ENCODE measurements at regions of chr10 and their contacts with region 1.

Region 1: DNA sequence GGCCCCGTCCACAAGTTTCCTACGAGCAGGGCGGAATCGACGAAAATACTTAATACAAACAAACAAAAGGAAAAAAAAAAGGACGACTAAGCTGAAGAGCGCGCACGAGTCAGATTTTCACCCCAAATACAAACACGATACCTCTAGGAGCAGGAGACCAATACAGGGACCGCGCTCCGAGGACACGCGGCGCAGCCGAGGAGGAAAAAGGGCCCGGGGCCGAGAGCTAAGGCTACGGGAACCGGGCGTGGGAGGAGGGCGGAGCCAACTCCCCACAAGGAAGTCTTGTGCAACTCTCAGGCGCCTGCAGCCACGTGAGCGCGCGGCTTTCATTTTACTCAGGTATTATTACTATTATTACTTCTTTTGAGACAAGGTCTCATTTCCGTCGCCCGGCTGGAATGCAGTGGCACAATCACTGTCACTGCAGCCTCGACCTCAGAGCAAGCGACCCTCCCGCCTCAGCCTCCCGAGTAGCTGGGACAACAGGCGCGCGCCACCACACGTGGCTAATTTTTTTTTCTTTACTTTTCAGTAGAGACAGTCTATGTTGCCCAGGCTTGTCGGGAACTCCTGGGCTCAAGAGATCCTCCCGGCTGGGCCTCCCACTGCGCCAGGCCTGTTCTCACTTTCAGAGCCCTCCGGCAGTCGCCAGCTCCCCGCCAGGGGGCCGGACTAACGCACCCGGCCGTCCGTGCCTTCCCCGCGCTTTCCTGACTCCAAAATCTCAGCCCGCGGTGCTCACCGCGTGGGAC is 1.2 kb downstream of the HNRNPF start:
- DNase-seq: peak; percentile 78 to 90 (median 81)
- H3K4me3 ChIP-seq: peak overlapping the region; percentile 97
- H3K4me3 Mint-ChIP-seq: peak overlapping the region; percentile 96 to 100 (median 99)
- H3K27ac ChIP-seq: peak overlapping the region; percentile 100
- H3K27ac Mint-ChIP-seq: peak overlapping the region; percentile 97 to 100 (median 99)
- H3K4me1 ChIP-seq: peaks cover 39% of the 10 kb centered on the region
- H3K4me1 Mint-ChIP-seq: peaks cover 28 to 43% (median 31%) of the 10 kb centered on the region in 3 donors
- H3K27me3 ChIP-seq: no peaks in the 10 kb centered on the region
- H3K27me3 Mint-ChIP-seq: peaks cover 0 to 2% of the 10 kb centered on the region in 2 donors

Region 2: DNA sequence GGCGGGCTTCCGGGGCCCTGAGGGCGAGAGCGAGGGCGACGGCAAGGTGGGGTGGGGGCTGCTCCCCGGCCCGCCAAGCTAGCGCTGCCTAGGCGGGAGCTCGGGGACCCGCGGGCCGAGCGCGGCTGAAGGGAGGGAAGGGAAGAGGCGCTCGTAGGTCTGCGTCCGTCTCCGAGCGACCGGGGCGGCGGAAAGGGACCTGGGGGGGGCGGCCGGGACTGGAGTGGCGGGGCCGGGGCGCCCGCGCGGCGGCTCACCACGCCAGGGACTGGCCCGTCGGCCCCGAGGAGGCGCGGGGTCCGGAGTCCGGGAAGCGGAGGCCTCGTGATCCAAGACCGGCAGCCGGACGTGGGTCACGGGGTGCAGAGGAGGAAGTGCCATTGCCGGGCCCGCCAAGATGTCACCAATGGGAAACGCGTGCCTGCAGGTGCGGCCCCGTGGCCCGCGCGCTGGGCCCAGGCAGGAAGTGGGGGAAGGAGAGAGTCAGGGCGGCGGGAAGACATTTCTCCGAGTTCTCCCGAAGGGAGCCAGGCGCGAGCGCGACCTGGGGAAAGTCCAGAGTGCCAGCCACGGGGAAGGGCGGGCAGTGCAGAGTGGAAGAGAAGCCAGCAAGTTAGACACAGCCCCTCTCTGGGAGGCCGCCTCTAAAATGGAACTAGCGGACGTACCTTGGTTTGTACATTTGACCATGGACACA is 10.7 kb before region 1 on chr10:
- CTCF ChIA-PET with region 1: interaction called, 12 read pairs
- POLR2A ChIA-PET with region 1: interaction called, 18 read pairs
- DNase-seq: peak; percentile 67 to 83 (median 78)
- H3K4me3 ChIP-seq: peak overlapping the region; percentile 65
- H3K4me3 Mint-ChIP-seq: peak overlapping the region; percentile 92 to 96 (median 95)
- H3K27ac ChIP-seq: peak overlapping the region; percentile 85
- H3K27ac Mint-ChIP-seq: peak overlapping the region; percentile 91 to 100 (median 98)
- H3K4me1 ChIP-seq: peaks cover 80% of the 10 kb centered on the region
- H3K4me1 Mint-ChIP-seq: peaks cover 77 to 92% (median 90%) of the 10 kb centered on the region in 3 donors
- H3K27me3 ChIP-seq: no peaks in the 10 kb centered on the region
- H3K27me3 Mint-ChIP-seq: no peaks in the 10 kb centered on the region

Region 3: DNA sequence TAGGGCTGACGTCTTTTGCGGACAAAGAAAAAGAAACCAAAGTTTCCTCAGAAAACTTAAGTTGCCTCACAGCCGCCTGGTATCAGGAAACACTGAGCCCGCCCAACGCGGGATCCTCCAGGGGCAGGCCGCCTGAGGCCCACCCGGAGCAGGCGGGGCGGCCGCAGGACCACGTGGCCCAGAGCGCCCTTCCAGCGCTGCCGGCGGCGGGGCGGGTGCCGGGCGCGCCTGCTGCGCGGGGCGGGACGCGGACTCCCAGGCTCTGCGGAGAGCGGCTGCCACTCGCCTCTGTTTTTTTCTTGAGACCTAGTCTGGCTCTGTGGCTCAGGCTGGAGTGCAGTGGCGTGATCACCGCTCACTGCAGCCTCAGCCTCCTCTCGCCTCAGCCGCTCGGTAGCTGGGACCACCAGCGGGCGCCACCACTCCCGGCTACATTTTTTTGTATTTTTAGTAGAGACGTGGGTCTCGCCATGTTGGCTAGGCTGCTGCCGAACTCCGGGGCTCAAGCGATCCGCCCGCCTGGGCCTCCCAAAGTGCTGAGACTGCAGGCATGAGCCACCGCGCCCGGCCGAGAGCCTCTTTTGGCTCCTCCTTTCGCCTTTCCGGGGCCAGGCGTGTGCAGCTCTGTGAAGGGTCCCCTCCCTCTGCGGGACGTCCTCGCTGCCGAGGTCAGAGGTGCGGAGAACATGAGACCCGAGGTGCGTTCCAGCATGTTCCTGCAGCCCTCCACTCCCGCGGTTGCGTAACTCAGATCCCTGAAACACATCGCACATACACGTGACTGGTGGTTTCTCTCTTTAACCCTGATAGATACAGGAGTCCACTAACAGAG is 12.8 kb after region 1 on chr10:
- CTCF ChIA-PET with region 1: interaction called, 14 read pairs
- POLR2A ChIA-PET with region 1: interaction called, 24 read pairs
- DNase-seq: peak; percentile 78 to 91 (median 89)
- H3K4me3 ChIP-seq: peak overlapping the region; percentile 90
- H3K4me3 Mint-ChIP-seq: peak overlapping the region; percentile 92 to 94 (median 94)
- H3K27ac ChIP-seq: peak overlapping the region; percentile 88
- H3K27ac Mint-ChIP-seq: peak overlapping the region; percentile 97 to 100 (median 98)
- H3K4me1 ChIP-seq: peaks cover 37% of the 10 kb centered on the region
- H3K4me1 Mint-ChIP-seq: peaks cover 33 to 39% (median 38%) of the 10 kb centered on the region in 3 donors
- H3K27me3 ChIP-seq: no peaks in the 10 kb centered on the region
- H3K27me3 Mint-ChIP-seq: no peaks in the 10 kb centered on the region

Region 4: DNA sequence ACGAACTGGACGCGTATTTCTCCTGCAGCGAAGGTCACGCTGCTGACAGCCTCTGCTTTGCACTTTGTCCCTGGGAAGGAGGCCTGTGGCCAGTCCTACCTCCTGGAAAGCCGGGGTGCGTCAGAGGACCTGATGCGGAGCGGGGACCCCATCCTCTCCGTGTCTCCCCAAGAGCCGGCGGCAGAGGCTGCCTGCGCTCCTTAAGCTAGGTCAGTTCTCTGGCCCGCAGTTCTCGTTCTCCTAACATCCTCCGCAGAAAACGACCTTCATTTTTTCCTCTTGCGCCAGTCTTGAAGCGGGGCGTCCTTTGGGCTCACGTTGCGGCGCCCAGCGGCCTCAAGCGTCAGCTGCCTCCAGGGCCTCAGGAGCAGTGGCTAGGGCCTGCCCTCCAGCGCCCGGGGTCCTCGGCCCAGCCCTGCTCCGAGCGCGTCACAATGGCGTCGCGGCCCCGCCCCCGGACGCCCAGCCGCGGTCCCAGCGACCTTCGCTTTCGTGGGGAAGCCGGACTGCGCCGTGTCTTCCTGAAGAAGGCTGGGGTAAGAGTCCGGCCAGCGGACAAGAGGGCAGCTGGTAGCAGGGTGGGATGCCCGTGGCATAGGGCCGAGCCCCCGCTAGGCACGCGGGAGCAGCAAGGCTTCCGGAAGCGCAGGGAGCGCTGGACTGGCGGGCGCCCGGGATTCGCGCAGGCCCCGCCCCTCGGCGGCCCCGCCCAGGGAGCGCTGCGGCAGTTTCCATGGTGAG is 28.8 kb after region 1 on chr10 and contains the start of gene ZNF487:
- CTCF ChIA-PET with region 1: interaction called, 13 read pairs
- POLR2A ChIA-PET with region 1: interaction called, 17 read pairs
- DNase-seq: peak; percentile 80 to 97 (median 94)
- H3K4me3 ChIP-seq: peak within 1 kb of the TSS; percentile 99
- H3K4me3 Mint-ChIP-seq: peak within 1 kb of the TSS; percentile 94 to 100 (median 97)
- H3K27ac ChIP-seq: peak within 1 kb of the TSS; percentile 100
- H3K27ac Mint-ChIP-seq: peak within 1 kb of the TSS; percentile 96 to 100 (median 99)
- H3K4me1 ChIP-seq: peaks cover 12% of the 10 kb centered on the region
- H3K4me1 Mint-ChIP-seq: peaks cover 20 to 36% (median 30%) of the 10 kb centered on the region in 3 donors
- H3K27me3 ChIP-seq: no peaks in the 10 kb centered on the region
- H3K27me3 Mint-ChIP-seq: no peaks in the 10 kb centered on the region
- total RNA-seq, gene ZNF487: 1.5 to 4.2 TPM

Measured in CD8-positive, alpha-beta memory T cell (primary cell).